ENCODE measurements at regions of chr1 and their contacts with region 1.

Region 1: DNA sequence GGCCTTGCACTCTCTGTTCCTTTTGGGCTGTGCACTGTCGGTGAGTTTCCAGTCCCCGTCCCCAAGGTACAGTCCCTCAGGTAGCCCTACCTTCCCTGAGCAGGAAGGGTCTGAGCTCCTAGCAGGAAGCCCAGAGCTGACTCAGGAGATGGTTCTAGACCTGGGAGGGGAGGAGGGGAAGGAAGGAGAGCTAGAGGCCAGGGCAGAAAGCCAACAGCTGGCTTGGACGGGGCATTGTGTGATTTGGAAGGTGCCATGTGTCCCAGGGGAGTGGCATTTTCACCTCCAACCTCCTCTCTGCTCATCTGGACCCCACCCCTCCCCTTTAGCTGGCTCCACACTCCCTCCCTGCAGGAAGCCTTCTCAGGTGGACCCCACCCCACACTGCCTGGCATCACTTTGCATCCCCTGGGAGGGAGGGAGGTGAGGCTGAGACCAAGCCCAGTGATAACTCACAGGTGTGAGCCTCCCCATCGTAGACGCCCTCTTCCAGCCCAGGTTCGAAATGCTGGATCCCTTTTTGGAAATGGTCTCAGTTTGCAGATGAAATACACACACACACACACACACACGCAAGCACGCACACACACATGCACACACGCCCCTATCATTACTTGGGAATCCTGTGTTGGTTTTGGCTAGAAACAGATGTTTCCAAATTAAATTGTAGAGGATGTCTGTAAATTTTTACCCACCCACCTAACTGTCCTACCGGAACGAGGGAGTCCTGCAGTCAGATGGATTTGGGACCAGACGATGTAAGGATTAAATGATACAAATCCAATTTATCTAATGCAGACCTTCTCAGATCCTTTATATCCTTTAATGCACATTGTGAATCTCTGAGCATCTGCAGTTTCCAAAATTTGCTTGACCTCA is 19.7 kb upstream of the IFNLR1 start:
- DNase-seq: no peak
- H3K4me3 ChIP-seq: no peak overlapping the region
- H3K27ac ChIP-seq: no peak overlapping the region
- H3K4me1 ChIP-seq: peaks cover 13 to 14% of the 10 kb centered on the region in 2 donors
- H3K27me3 ChIP-seq: no peaks in the 10 kb centered on the region
- CTCF ChIP-seq: no peak
- POLR2A ChIP-seq: no peak

Region 2: DNA sequence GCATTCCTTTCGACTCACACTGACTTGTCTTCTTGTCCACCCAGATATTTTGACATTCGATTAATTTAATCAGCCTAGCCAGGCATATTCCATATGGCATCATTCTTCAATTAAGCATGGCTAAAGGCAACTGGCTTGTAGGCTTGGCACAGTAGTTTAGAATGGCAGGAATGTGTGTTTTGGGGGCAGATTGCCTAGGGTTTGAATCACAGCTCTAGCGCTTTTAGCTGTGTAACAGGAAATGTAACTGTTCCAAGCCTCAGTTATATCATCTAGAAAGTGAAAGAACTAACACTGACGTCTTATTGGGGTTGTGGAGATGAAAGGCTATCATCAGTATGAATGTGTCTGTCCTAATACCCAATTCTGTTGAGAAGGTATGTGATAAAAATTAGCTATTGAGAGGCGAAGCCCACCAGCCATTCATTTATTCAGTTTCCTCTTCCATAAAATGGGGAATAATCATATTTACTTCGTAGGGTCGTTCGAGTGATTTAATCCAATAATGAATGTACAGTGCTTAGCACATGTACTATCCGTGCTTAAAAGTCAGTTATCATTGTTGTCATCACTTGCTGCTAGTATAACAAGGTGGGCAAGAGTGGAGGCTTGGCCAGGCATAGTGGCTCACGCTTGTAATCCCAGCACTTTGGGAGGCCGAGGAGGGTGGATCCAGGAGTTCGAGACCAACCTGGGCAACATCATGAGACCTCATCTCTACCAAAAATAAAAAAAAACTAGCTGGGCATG is 70.8 kb after region 1 on chr1:
- intact Hi-C with region 1: loop called (anchors 5 kb)
- DNase-seq: no peak
- H3K4me3 ChIP-seq: no peak overlapping the region
- H3K27ac ChIP-seq: peak overlapping the region in 1 of 2 donors; percentile 33
- H3K4me1 ChIP-seq: no peaks in the 10 kb centered on the region
- H3K27me3 ChIP-seq: no peaks in the 10 kb centered on the region
- CTCF ChIP-seq: no peak
- POLR2A ChIP-seq: no peak

Measured in breast epithelium (tissue), 4 donors.